Calu3 (cell line): ENCODE measurements at regions of chr7 and their contacts with region 1.

Region 1: GRCh38 chr7:21393937-21394336 is 33.9 kb upstream of the SP4 start:
- DNase-seq: no peak
- H3K4me3 Mint-ChIP-seq: no peak overlapping the region
- H3K27ac Mint-ChIP-seq: no peak overlapping the region
- H3K4me1 Mint-ChIP-seq: no peaks in the 10 kb centered on the region
- H3K27me3 Mint-ChIP-seq: no peaks in the 10 kb centered on the region
- CTCF ChIP-seq: no peak

Region 2: GRCh38 chr7:21076054-21076453 is 317.9 kb before region 1 on chr7:
- CTCF ChIA-PET with region 1: no interaction called
- intact Hi-C with region 1: no loop called
- DNase-seq: no peak
- H3K4me3 Mint-ChIP-seq: no peak overlapping the region
- H3K27ac Mint-ChIP-seq: no peak overlapping the region
- H3K4me1 Mint-ChIP-seq: peaks cover 14% of the 10 kb centered on the region
- H3K27me3 Mint-ChIP-seq: peaks cover 78% of the 10 kb centered on the region
- CTCF ChIP-seq: no peak

Region 3: DNA sequence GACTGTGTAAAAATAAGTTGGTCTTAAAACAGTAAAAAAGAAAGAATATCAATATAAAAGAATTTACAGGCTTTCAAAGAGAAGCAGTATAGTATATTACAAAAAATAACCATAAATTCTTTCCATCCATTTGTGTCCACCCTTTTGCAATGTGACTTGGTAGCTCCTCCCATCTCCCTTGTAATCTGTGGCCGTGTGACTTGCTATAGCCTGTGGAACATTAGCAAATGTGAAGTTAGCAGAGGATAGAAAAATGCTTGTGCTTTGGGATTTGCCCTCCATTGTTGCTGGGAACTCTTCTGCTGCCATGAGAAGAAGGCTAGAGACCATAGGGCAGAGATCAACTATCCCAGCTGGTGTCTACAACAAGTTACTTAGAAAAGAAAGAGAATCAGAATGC is 1741.8 kb after region 1 on chr7:
- CTCF ChIA-PET with region 1: no interaction called
- intact Hi-C with region 1: loop called (anchors 10 kb)
- DNase-seq: no peak
- H3K4me3 Mint-ChIP-seq: no peak overlapping the region
- H3K27ac Mint-ChIP-seq: no peak overlapping the region
- H3K4me1 Mint-ChIP-seq: no peaks in the 10 kb centered on the region
- H3K27me3 Mint-ChIP-seq: no peaks in the 10 kb centered on the region
- CTCF ChIP-seq: no peak